Dorsolateral prefrontal cortex (tissue), 120 donors: ENCODE measurements at regions of chr6 and their contacts with region 1.

Region 1: DNA sequence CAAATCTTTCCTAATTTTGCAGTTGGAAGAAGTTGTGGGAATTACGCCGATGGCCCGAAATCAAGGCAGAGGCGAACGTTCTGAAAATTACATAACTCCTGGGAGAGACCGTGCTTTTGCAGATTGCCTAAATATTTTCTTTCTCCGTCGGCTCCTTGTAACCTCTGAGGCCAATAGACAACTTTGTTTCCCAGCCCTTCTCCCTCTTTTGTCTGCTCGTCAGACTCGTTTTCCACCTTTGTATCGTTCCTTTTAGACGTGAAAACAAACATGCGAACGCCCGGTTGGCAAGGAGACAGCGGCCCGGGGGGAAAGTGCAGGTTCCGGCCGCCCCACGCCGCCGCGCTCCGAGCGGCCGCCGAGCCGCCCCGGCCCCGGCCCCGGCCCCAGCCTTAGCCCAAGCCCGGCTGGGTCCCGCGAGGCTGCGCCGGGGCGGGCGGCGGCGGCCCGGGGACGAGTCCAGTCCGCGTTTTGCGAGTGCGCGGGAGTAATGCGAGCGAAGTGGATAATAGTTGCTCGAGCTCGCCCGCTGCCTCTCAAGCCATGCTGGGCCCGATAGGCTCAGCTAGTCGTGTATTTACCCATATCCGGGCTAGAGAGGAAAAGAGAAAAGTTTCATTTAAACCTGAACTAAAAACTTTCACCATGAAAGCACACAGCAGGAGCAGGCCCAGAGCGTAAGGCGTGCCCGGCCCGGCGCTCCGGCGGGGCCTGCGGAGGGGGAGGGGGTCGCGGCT is at the start of gene ARID1B:
- DNase-seq: peak; percentile 63 to 86 (median 76)
- H3K4me3 ChIP-seq: peak within 1 kb of the TSS; percentile 43 to 89 (median 77)
- H3K27ac ChIP-seq: peak within 1 kb of the TSS; percentile 93 to 100 (median 99)
- H3K27me3 ChIP-seq: no peaks in the 10 kb centered on the region
- CTCF ChIP-seq: peak in 1 of 56 donors; percentile 9
- total RNA-seq, gene ARID1B: 96.8 to 200 (median 147) TPM

Region 2: DNA sequence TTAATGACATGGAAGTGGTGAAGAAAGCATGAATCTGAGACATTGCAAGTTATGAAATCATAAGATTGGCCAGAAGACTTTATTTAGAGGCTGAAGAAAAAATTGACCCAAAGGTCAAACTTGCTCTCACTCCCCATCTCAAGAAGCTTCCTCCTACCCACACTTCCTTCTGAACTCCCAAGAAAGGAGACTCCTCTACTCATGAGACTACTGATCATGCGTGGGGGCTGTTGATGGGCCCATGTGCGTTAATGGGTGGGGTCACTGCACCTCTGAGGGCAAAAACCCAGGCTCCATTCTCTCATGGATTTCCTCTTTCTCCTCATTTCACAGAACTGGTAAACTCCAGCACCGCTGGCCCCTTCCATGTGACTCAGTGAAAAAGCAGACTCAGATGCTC is 470.5 kb before region 1 on chr6:
- intact Hi-C with region 1: no loop called
- DNase-seq: no peak
- H3K4me3 ChIP-seq: no peak overlapping the region
- H3K27ac ChIP-seq: no peak overlapping the region
- H3K27me3 ChIP-seq: no peaks in the 10 kb centered on the region
- CTCF ChIP-seq: no peak

Region 3: GRCh38 chr6:156795825-156796224 is 18.8 kb after region 1 on chr6:
- intact Hi-C with region 1: no loop called
- DNase-seq: peak in 3 of 10 donors; percentile 23 to 55 (median 33)
- H3K4me3 ChIP-seq: peak overlapping the region in 54 of 59 donors; percentile 4 to 61 (median 36)
- H3K27ac ChIP-seq: peak overlapping the region in 6 of 59 donors; percentile 5 to 56 (median 14)
- H3K27me3 ChIP-seq: no peaks in the 10 kb centered on the region
- CTCF ChIP-seq: no peak

Region 4: GRCh38 chr6:156866220-156867015 is 89.4 kb after region 1 on chr6:
- intact Hi-C with region 1: loop called in 1 of 2 experiments (anchors 5 kb)
- DNase-seq: peak in 7 of 10 donors; percentile 29 to 63 (median 54)
- H3K4me3 ChIP-seq: no peak overlapping the region
- H3K27ac ChIP-seq: peak overlapping the region in 14 of 59 donors; percentile 0 to 41 (median 16)
- H3K27me3 ChIP-seq: no peaks in the 10 kb centered on the region
- CTCF ChIP-seq: peak in 26 of 56 donors; percentile 13 to 58 (median 32)

Region 5: DNA sequence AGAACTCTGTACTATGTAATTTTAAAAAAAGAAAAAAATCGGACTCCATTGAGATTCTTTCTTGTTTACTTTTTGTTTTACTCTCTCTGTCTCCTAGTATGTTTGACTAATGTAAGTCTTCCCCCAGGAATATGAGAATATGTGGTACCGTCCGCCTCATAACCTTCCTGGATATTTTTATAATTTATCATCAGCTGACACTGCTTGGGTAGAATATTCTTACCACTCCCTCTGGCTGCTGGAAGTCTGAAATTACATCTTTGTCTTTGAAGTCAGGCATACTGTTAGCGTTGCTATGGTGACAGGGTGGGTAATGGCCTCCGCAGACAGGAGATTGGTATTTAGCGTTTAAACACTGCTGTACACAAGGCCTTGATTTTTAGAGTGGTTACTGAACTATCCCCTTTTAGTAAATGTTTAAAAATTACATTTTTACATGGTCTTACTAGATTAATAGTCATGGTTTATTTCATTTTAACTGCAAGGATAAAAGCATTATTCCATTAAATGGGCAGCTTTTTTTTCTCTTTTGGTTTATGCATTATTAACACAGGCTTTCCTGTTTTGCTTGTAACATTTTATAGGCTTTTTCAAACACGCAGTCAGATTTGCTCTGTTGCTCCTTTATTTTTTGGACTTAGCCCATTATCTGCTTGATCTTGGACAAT is 176.6 kb after region 1 on chr6:
- intact Hi-C with region 1: loop called in 1 of 2 experiments (anchors 10 kb)
- DNase-seq: no peak
- H3K4me3 ChIP-seq: peak overlapping the region in 24 of 59 donors; percentile 3 to 35 (median 17)
- H3K27ac ChIP-seq: peak overlapping the region in 23 of 59 donors; percentile 8 to 57 (median 26)
- H3K27me3 ChIP-seq: no peaks in the 10 kb centered on the region
- CTCF ChIP-seq: peak in 51 of 56 donors; percentile 11 to 62 (median 38)

Region 6: GRCh38 chr6:157021344-157021992 is 244.5 kb after region 1 on chr6:
- intact Hi-C with region 1: loop called (anchors 1 to 2 kb)
- DNase-seq: peak; percentile 82 to 93 (median 89)
- H3K4me3 ChIP-seq: peak overlapping the region; percentile 48 to 98 (median 83)
- H3K27ac ChIP-seq: peak overlapping the region; percentile 89 to 100 (median 99)
- H3K27me3 ChIP-seq: no peaks in the 10 kb centered on the region
- CTCF ChIP-seq: peak in 51 of 56 donors; percentile 5 to 67 (median 43)

Region 7: GRCh38 chr6:157184202-157185020 is 407.4 kb after region 1 on chr6:
- intact Hi-C with region 1: loop called (anchors 10 kb)
- DNase-seq: peak; percentile 67 to 82 (median 76)
- H3K4me3 ChIP-seq: peak overlapping the region in 53 of 59 donors; percentile 2 to 62 (median 40)
- H3K27ac ChIP-seq: peak overlapping the region in 31 of 59 donors; percentile 1 to 72 (median 42)
- H3K27me3 ChIP-seq: no peaks in the 10 kb centered on the region
- CTCF ChIP-seq: peak; percentile 57 to 98 (median 91)